MCF 10A (cell line): ENCODE measurements at regions of chr7 and their contacts with region 1.

Region 1: DNA sequence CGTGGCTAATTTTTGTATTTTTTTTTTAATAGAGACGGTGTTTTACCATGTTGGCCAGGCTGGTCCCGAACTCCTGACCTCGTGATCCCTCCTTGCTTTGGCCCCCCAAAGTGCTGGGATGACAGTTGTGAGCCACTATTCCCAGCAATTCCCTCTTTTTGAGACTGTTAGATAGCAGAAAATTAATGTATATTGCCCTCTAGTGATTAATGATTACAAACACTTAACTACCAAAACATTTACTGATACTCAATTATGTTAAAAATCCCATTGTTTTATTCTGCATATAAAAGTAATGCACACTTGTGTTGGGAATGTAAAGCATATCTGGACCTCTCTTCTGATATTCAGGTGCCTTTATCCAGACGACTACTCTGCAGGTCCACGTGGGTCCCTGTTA is 41.2 kb upstream of the COBL start:
- DNase-seq: no peak
- H3K4me3 Mint-ChIP-seq: no peak overlapping the region
- H3K27ac Mint-ChIP-seq: no peak overlapping the region
- H3K4me1 Mint-ChIP-seq: no peaks in the 10 kb centered on the region
- H3K27me3 Mint-ChIP-seq: peaks cover 10% of the 10 kb centered on the region
- CTCF ChIP-seq: peak; percentile 25

Region 2: GRCh38 chr7:51175316-51175991 is 182.4 kb before region 1 on chr7:
- CTCF ChIA-PET with region 1: interaction called, 11 read pairs
- POLR2A ChIA-PET with region 1: no interaction called
- intact Hi-C with region 1: no loop called
- DNase-seq: no peak
- H3K4me3 Mint-ChIP-seq: no peak overlapping the region
- H3K27ac Mint-ChIP-seq: no peak overlapping the region
- H3K4me1 Mint-ChIP-seq: no peaks in the 10 kb centered on the region
- H3K27me3 Mint-ChIP-seq: no peaks in the 10 kb centered on the region
- CTCF ChIP-seq: no peak

Region 3: GRCh38 chr7:51255536-51256208 is 102.1 kb before region 1 on chr7:
- CTCF ChIA-PET with region 1: interaction called, 10 read pairs
- POLR2A ChIA-PET with region 1: no interaction called
- intact Hi-C with region 1: loop called (anchors 1 kb)
- DNase-seq: peak; percentile 16
- H3K4me3 Mint-ChIP-seq: no peak overlapping the region
- H3K27ac Mint-ChIP-seq: no peak overlapping the region
- H3K4me1 Mint-ChIP-seq: peaks cover 12% of the 10 kb centered on the region
- H3K27me3 Mint-ChIP-seq: no peaks in the 10 kb centered on the region
- CTCF ChIP-seq: no peak

Region 4: GRCh38 chr7:51324206-51324884 is 33.5 kb before region 1 on chr7:
- CTCF ChIA-PET with region 1: interaction called, 10 read pairs
- POLR2A ChIA-PET with region 1: no interaction called
- intact Hi-C with region 1: loop called (anchors 5 kb)
- DNase-seq: peak; percentile 96
- H3K4me3 Mint-ChIP-seq: no peak overlapping the region
- H3K27ac Mint-ChIP-seq: peak overlapping the region; percentile 94
- H3K4me1 Mint-ChIP-seq: peaks cover 21% of the 10 kb centered on the region
- H3K27me3 Mint-ChIP-seq: no peaks in the 10 kb centered on the region
- CTCF ChIP-seq: no peak

Region 5: GRCh38 chr7:51666266-51666665 is 308.4 kb after region 1 on chr7:
- CTCF ChIA-PET with region 1: no interaction called
- POLR2A ChIA-PET with region 1: no interaction called
- intact Hi-C with region 1: no loop called
- DNase-seq: no peak
- H3K4me3 Mint-ChIP-seq: no peak overlapping the region
- H3K27ac Mint-ChIP-seq: no peak overlapping the region
- H3K4me1 Mint-ChIP-seq: no peaks in the 10 kb centered on the region
- H3K27me3 Mint-ChIP-seq: peaks cover 93% of the 10 kb centered on the region
- CTCF ChIP-seq: no peak